ENCODE measurements at regions of chr19 and their contacts with region 1.

Region 1: GRCh38 chr19:54168174-54168917 is 4.6 kb downstream of the TMC4 start:
- DNase-seq: peak; percentile 90
- CTCF ChIP-seq: peak; percentile 90

Region 2: DNA sequence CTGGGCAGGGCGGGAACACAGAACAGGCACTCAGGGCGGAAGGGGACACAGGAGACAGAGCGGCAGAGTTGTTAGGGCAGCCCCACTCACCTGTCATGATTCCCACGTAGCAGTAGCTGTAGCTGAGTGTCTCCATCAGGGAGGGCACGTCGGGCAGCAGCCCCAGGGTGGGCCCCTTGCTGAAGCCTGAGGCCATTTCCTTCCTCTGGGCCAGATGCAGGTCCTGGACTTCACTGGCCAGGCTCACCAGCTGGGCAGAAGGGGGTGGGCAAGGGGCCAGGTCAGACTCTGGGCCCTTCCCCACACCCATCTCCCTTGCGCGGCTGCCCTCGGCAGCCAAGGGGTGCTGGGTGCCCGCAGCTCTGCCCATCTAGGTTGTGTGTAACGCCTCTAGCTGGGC is 15.1 kb after region 1 on chr19:
- CTCF ChIA-PET with region 1: interaction called, 27 read pairs
- POLR2A ChIA-PET with region 1: interaction called, 5 read pairs
- DNase-seq: no peak
- CTCF ChIP-seq: no peak

Region 3: GRCh38 chr19:54218960-54219661 is 50.8 kb after region 1 on chr19:
- CTCF ChIA-PET with region 1: no interaction called
- POLR2A ChIA-PET with region 1: no interaction called
- DNase-seq: no peak
- CTCF ChIP-seq: no peak

Region 4: DNA sequence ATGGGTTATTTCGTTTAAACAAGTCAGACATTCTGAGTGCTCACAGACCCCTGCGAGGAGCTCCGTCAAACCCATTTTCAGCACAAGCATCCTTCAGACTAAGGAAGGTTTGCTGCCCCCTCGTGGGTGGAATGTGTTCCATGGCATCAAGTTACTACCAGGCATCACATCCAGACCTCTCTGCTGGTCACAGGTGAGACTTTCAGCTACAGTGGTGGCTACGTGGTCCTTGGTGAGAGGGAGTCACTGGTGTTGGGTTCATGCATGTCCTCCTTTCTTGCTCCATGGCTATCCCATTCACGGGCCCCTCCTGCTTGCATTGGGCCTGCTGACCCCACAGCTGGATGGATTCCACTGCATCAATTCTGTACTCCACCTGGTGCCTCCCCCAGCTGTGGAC is 97.8 kb after region 1 on chr19:
- CTCF ChIA-PET with region 1: interaction called, 28 read pairs
- POLR2A ChIA-PET with region 1: interaction called, 3 read pairs
- DNase-seq: peak; percentile 70
- CTCF ChIP-seq: peak; percentile 72

Measured in GM10248 (cell line).